ENCODE measurements at regions of chr11 and their contacts with region 1.

Region 1: GRCh38 chr11:19441752-19442553 is 201.2 kb upstream of the E2F8 start:
- DNase-seq: peak; percentile 84
- ATAC-seq: peak; percentile 88
- H3K4me3 Mint-ChIP-seq: no peak overlapping the region
- H3K27ac Mint-ChIP-seq: peak overlapping the region; percentile 29
- H3K4me1 Mint-ChIP-seq: peaks cover 19% of the 10 kb centered on the region
- H3K27me3 Mint-ChIP-seq: peaks cover 57% of the 10 kb centered on the region

Region 2: DNA sequence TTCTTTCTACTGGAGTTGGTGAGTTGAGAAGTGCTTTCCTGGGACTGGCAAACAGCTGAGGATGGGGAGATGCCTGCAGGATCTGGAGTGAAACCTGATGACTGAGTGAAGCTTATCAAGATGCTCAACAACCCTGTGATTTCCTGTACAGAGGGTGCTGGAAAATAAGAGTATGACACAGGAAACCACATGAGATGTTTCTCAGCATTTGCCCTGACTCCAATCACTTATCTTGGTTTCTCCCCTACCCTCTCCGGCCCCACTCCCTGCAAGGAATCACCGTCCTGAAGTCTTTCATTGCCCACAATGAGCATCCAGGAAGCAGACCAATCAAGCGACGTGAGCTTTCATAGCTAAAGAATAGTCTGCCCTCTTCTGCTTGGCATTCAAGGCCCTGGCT is 381.3 kb before region 1 on chr11 and contains the start of gene MRGPRX2:
- CTCF ChIA-PET with region 1: no interaction called
- POLR2A ChIA-PET with region 1: no interaction called
- intact Hi-C with region 1: loop called in 1 of 2 experiments (anchors 1 kb)
- DNase-seq: peak; percentile 52
- ATAC-seq: peak; percentile 91
- H3K4me3 Mint-ChIP-seq: no peak within 1 kb of the TSS
- H3K27ac Mint-ChIP-seq: peak within 1 kb of the TSS; percentile 20
- H3K4me1 Mint-ChIP-seq: peaks cover 19% of the 10 kb centered on the region
- H3K27me3 Mint-ChIP-seq: peaks cover 15% of the 10 kb centered on the region
- total RNA-seq, gene MRGPRX2: not detected

Region 3: GRCh38 chr11:19116971-19117750 is 324.8 kb before region 1 on chr11 and contains the start of gene ZDHHC13:
- CTCF ChIA-PET with region 1: no interaction called
- POLR2A ChIA-PET with region 1: no interaction called
- intact Hi-C with region 1: loop called in 1 of 2 experiments (anchors 5 kb)
- DNase-seq: peak; percentile 97
- ATAC-seq: peak; percentile 99
- H3K4me3 Mint-ChIP-seq: peak within 1 kb of the TSS; percentile 89
- H3K27ac Mint-ChIP-seq: peak within 1 kb of the TSS; percentile 87
- H3K4me1 Mint-ChIP-seq: peaks cover 51% of the 10 kb centered on the region
- H3K27me3 Mint-ChIP-seq: no peaks in the 10 kb centered on the region
- total RNA-seq, gene ZDHHC13: 22.9 to 25.9 TPM

Region 4: DNA sequence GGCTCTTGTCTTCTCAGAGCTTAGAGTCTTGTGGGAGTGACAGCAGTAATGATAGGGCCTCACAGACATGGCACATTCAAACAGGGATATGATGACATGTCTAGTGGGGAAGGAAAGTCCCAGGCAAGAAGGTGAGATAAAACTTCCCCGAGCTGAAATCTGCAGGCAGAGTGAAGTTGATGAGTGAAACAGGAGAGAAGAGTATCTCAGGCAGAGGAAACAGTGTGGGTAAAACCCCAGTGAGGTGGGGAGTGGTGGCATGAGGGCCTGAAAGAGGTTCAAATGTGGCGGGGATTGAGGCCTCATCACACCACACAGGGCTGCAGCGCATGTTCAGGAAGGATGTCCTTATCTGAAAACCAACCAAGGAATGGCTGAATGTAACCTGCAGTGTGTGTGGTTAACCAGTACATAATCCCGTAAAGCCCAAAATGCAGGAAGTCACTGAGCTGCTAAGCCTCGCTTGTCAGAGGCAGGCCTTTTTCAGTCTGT is 47.4 kb before region 1 on chr11:
- CTCF ChIA-PET with region 1: no interaction called
- POLR2A ChIA-PET with region 1: interaction called, 5 read pairs
- intact Hi-C with region 1: loop called in 1 of 2 experiments (anchors 1 kb)
- DNase-seq: peak; percentile 41
- ATAC-seq: peak; percentile 91
- H3K4me3 Mint-ChIP-seq: no peak overlapping the region
- H3K27ac Mint-ChIP-seq: no peak overlapping the region
- H3K4me1 Mint-ChIP-seq: peaks cover 4% of the 10 kb centered on the region
- H3K27me3 Mint-ChIP-seq: peaks cover 14% of the 10 kb centered on the region

Region 5: GRCh38 chr11:19712281-19713220 is 270.6 kb after region 1 on chr11 and contains the start of gene NAV2:
- CTCF ChIA-PET with region 1: no interaction called
- POLR2A ChIA-PET with region 1: no interaction called
- intact Hi-C with region 1: loop called (anchors 1 to 10 kb)
- DNase-seq: peak; percentile 86
- ATAC-seq: peak; percentile 98
- H3K4me3 Mint-ChIP-seq: peak within 1 kb of the TSS; percentile 77
- H3K27ac Mint-ChIP-seq: peak within 1 kb of the TSS; percentile 85
- H3K4me1 Mint-ChIP-seq: peaks cover 26% of the 10 kb centered on the region
- H3K27me3 Mint-ChIP-seq: peaks cover 39% of the 10 kb centered on the region
- total RNA-seq, gene NAV2: 0.54 to 0.55 TPM

Region 6: GRCh38 chr11:20035701-20036620 is 594.0 kb after region 1 on chr11:
- CTCF ChIA-PET with region 1: no interaction called
- POLR2A ChIA-PET with region 1: no interaction called
- intact Hi-C with region 1: loop called in 1 of 2 experiments (anchors 5 kb)
- DNase-seq: no peak
- ATAC-seq: no peak
- H3K4me3 Mint-ChIP-seq: no peak overlapping the region
- H3K27ac Mint-ChIP-seq: no peak overlapping the region
- H3K4me1 Mint-ChIP-seq: peaks cover 8% of the 10 kb centered on the region
- H3K27me3 Mint-ChIP-seq: peaks cover 21% of the 10 kb centered on the region

Region 7: DNA sequence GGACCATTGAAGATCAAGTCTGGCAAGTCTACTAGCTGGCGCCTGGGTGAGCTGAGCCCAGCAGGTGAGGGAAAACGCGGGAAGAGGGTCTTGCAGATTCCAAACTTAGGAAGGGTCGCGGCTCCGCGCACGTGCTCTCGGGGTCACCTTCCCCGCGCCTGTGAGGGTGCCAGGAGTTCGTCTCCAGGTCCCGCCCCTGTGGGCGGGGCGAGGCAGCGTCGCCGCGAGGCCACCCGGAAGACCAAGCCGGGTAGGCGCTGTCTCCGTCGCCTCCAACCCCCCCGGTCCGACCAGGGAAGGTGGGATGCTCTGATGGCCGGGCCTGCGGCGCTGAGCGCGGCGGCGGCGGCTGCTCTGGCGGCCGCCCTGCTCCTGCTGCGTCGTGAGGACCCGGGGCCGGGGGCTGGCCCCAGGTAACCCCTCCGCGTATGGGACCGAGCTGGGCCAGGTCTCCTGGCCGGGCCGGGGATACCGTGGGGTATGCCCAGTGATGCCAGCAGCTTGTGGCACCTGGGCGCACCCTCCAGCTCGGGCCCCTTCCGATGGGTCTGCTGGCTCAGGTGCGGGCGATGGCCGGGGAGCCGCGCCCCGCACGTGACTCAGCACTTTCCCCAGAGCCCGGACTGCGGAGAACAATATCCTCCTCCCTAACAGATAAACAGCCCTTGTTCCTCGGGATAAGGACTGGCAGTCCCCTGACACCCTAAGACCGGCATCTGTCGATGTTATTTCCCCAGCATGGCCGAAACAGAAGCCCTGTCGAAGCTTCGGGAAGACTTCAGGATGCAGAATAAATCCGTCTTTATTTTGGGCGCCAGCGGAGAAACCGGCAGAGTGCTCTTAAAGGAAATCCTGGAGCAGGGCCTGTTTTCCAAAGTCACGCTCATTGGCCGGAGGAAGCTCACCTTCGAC is 921.8 kb after region 1 on chr11 and contains the start of gene HTATIP2:
- CTCF ChIA-PET with region 1: no interaction called
- POLR2A ChIA-PET with region 1: no interaction called
- intact Hi-C with region 1: loop called in 1 of 2 experiments (anchors 10 kb)
- DNase-seq: peak; percentile 82
- ATAC-seq: peak; percentile 79
- H3K4me3 Mint-ChIP-seq: peak within 1 kb of the TSS; percentile 76
- H3K27ac Mint-ChIP-seq: peak within 1 kb of the TSS; percentile 92
- H3K4me1 Mint-ChIP-seq: peaks cover 68% of the 10 kb centered on the region
- H3K27me3 Mint-ChIP-seq: no peaks in the 10 kb centered on the region
- total RNA-seq, gene HTATIP2: 41.4 to 60.4 TPM